ENCODE measurements at regions of chr10 and their contacts with region 1.

Region 1: GRCh38 chr10:67471022-67471421 is 225.0 kb downstream of the CTNNA3 start:
- DNase-seq: no peak
- H3K4me3 ChIP-seq: no peak overlapping the region
- H3K27ac ChIP-seq: no peak overlapping the region
- H3K4me1 ChIP-seq: no peaks in the 10 kb centered on the region
- H3K27me3 ChIP-seq: no peaks in the 10 kb centered on the region
- CTCF ChIP-seq: no peak
- EP300 ChIP-seq: no peak
- POLR2A ChIP-seq: no peak

Region 2: GRCh38 chr10:65670087-65670486 is 1800.9 kb before region 1 on chr10:
- intact Hi-C with region 1: loop called in 1 of 4 experiments (anchors 5 kb)
- DNase-seq: no peak
- H3K4me3 ChIP-seq: no peak overlapping the region
- H3K27ac ChIP-seq: no peak overlapping the region
- H3K4me1 ChIP-seq: peaks cover 3% of the 10 kb centered on the region
- H3K27me3 ChIP-seq: no peaks in the 10 kb centered on the region
- CTCF ChIP-seq: no peak
- EP300 ChIP-seq: no peak
- POLR2A ChIP-seq: no peak